PC-9 (cell line): ENCODE measurements at regions of chr1 and their contacts with region 1.

Region 1: GRCh38 chr1:24744911-24745710 is at the start of gene CLIC4:
- DNase-seq: peak; percentile 89 to 100
- H3K4me3 ChIP-seq: peak within 1 kb of the TSS; percentile 69
- H3K27ac ChIP-seq: peak within 1 kb of the TSS; percentile 60
- H3K4me1 ChIP-seq: peaks cover 31% of the 10 kb centered on the region
- H3K27me3 ChIP-seq: no peaks in the 10 kb centered on the region
- CTCF ChIP-seq: no peak
- total RNA-seq, gene CLIC4: 94.6 and 123 TPM in 2 replicates

Region 2: DNA sequence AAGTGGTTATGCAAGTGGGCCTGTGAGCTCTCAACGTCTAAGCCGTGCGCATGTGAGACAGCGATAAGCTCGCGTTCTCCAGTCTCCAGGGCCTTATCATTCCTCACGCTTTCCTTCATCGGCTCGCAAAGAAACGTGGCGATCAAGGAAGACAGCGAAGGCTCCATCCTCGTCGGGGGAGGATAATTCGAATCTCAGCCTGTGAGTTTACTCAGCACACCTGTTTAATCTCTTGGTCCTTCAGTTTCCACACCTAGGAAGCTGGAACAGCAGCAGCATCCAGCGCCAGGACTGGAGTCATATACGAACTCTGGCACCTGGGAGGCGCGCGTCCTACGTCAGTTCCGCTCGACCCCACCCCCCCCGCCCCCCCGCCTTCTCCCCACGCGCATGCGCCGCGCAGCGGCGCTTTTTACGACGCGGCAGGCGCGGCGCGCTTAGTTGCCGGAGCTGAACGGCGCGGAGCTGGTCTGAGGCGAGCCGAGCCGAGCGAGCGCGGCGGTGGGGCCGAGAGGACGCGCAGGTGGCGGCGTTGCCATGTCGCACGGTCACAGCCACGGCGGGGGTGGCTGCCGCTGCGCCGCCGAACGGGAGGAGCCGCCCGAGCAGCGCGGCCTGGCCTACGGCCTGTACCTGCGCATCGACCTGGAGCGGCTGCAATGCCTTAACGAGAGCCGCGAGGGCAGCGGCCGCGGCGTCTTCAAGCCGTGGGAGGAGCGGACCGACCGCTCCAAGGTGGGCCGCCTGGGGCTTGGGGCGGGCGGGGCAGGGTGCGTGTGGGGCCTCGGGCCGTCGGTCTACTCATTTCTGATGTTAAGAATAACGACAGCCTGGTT is 966.9 kb before region 1 on chr1 and contains the start of gene PITHD1:
- CTCF ChIA-PET with region 1: no interaction called
- POLR2A ChIA-PET with region 1: interaction called, 12 read pairs
- intact Hi-C with region 1: no loop called
- DNase-seq: peak; percentile 56 to 76
- H3K4me3 ChIP-seq: peak within 1 kb of the TSS; percentile 90
- H3K27ac ChIP-seq: peak within 1 kb of the TSS; percentile 81
- H3K4me1 ChIP-seq: peaks cover 29% of the 10 kb centered on the region
- H3K27me3 ChIP-seq: no peaks in the 10 kb centered on the region
- CTCF ChIP-seq: no peak
- total RNA-seq, gene PITHD1: 38.5 and 39.7 TPM in 2 replicates

Region 3: DNA sequence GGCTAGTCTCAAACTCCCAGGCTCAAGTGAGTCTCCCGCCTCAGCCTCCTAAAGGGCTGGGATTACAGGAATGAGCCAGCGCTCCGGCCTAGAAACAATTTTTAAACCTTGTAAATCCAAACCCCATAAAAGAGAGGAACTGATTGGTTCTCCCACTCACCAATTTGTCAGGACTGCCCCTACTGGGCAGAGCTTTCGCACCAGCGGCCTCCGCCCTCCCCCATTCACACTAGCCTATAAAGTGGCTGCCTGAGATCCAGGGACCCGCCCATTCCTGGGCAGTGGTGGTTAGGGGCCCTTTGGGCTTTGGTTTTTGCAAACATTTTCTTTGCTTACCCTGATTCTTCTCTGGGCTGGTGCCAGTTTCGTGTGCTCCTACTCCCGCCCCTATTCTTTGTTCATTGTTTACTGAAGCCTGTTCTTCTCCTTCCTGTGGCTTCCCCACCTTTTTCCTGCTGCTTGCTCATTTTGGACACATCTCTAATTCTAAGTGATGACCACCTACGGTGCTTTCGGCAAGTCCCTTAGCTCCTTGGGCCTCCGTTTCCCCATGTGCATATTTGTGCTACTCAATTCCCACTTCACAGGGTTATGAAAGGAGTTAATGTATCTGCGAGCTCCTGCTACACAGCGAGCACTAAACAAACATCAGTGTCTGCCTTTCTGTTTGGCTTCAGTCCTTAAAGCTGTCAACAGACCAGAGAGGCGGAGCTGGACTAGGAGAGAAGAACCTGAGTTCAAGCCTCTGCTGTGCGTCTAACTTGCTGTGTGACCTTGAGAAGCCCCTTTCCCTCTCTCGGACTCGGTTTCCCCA is 39.6 kb before region 1 on chr1:
- CTCF ChIA-PET with region 1: interaction called, 5 read pairs
- POLR2A ChIA-PET with region 1: interaction called, 12 read pairs
- intact Hi-C with region 1: loop called (anchors 1 kb)
- DNase-seq: peak; percentile 85 to 93
- H3K4me3 ChIP-seq: peak overlapping the region; percentile 34; the same call in 1 of the 2 replicates
- H3K27ac ChIP-seq: peak overlapping the region; percentile 36
- H3K4me1 ChIP-seq: peaks cover 9% of the 10 kb centered on the region
- H3K27me3 ChIP-seq: no peaks in the 10 kb centered on the region
- CTCF ChIP-seq: no peak

Region 4: DNA sequence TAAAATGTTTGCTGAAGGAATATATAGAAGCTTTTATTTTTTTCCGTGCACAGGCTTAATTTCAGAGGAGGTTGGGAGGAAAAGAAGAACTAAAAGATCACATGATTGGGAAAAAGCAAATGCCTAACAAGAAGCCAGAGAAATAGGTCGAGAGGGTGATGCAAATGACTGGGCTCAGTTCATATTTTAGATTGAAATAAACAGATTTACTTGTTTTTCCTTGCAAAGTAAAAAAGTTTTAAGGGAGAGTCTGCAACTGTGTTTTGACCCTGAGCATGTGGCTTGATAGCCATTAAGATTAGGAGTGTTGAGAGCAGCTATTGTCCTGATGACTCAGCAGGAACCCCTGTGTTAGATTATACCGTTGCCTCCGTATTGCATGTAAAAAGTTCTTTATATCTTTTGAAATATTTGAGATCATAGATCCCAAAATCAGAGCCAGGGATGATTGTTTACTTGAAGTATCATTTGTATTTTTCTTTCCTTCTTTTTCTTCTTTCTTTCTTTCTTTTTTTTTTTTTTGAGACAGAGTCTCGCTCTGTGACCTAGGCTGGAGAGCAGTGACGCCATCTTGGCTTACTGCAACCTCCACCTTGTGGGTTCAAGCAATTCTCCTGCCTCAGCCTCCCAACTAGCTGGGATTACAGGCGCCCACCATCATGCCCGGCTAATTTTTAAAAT is 20.3 kb after region 1 on chr1:
- CTCF ChIA-PET with region 1: interaction called, 12 read pairs
- POLR2A ChIA-PET with region 1: interaction called, 5 read pairs
- intact Hi-C with region 1: no loop called
- DNase-seq: no peak
- H3K4me3 ChIP-seq: no peak overlapping the region
- H3K27ac ChIP-seq: no peak overlapping the region
- H3K4me1 ChIP-seq: no peaks in the 10 kb centered on the region; the same call in 1 of the 2 replicates
- H3K27me3 ChIP-seq: no peaks in the 10 kb centered on the region
- CTCF ChIP-seq: no peak

Region 5: GRCh38 chr1:24822887-24823286 is 77.8 kb after region 1 on chr1:
- CTCF ChIA-PET with region 1: no interaction called
- POLR2A ChIA-PET with region 1: interaction called, 11 read pairs
- intact Hi-C with region 1: loop called (anchors 5 kb)
- DNase-seq: no peak
- H3K4me3 ChIP-seq: no peak overlapping the region
- H3K27ac ChIP-seq: no peak overlapping the region
- H3K4me1 ChIP-seq: no peaks in the 10 kb centered on the region
- H3K27me3 ChIP-seq: no peaks in the 10 kb centered on the region
- CTCF ChIP-seq: no peak

Region 6: DNA sequence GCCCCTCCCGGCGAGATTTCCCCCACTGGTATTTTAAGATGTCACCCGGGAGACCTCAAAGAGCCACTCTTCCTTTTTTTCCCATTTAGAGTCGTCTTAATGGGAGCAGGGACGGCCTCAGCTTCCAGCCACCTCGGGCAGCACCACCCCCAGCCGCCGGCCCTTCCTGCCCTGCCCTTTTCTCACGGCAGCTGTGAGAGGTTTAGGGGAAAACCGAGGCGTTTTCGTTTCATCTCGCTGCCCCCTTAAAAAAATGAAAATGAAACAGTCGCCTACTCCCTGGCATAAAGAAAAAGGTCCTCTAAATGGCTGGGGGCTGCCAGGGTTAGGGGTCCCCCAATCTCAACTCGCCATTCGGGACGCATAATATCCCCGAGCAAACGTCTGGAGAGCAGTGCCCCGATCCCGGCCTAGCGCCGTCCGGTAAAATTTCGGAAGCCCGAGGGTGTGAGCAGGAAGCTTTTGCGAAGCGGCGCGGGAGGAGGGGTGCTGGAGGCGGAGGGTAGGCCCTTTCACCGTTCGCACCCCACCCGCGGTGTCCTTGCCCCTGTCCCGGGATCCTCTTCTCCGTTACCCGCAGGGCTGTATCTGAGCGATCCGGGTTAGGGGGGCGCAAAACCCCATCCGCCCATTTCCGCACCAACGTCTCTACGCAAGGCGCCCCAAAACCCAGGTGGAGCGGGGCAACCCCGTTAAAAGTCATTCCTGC is 183.7 kb after region 1 on chr1:
- CTCF ChIA-PET with region 1: no interaction called
- POLR2A ChIA-PET with region 1: no interaction called
- intact Hi-C with region 1: no loop called
- DNase-seq: no peak
- H3K4me3 ChIP-seq: no peak overlapping the region
- H3K27ac ChIP-seq: no peak overlapping the region
- H3K4me1 ChIP-seq: no peaks in the 10 kb centered on the region
- H3K27me3 ChIP-seq: peaks cover 18% of the 10 kb centered on the region
- CTCF ChIP-seq: no peak